ENCODE measurements at regions of chr16 and their contacts with region 1.

Region 1: DNA sequence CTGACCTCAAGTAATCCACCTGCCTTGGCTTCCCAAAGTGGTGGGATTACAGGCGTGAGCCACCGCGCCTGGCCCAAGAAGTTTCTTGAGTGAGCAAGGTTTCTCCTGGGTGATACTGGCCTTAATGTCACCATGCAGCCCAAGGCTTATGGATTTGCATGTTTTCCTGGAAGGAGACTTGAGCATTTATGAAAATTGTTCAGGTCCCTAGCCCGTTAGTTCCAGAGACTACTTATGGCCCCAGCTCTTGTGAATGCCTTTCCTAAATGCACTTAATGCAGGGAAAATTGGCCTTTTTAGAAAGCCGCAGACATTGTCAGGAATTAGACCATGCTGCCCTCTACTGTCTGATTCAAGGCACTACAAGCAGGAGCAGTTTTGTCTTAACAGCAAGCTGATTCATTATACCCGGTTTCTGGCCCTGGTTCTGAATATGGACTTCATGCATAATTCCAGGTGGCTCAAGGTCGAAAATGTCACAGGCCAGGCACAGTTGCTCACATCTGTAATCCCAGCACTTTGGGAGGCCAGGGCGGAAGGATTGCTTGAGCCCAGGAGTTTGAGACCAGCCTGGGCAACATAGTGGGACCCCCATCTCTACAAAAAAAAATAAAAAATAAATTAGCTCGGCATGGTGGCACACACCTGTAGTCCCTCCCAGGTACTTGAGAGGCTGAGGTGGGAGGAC is 91.3 kb downstream of the SNX29 start:
- DNase-seq: no peak
- H3K4me3 ChIP-seq: no peak overlapping the region
- H3K27ac ChIP-seq: no peak overlapping the region
- H3K4me1 ChIP-seq: peaks cover 0 to 4% (median 1%) of the 10 kb centered on the region in 4 donors
- H3K27me3 ChIP-seq: no peaks in the 10 kb centered on the region
- CTCF ChIP-seq: peak; percentile 60 to 97 (median 92)
- EP300 ChIP-seq: no peak
- POLR2A ChIP-seq: no peak

Region 2: DNA sequence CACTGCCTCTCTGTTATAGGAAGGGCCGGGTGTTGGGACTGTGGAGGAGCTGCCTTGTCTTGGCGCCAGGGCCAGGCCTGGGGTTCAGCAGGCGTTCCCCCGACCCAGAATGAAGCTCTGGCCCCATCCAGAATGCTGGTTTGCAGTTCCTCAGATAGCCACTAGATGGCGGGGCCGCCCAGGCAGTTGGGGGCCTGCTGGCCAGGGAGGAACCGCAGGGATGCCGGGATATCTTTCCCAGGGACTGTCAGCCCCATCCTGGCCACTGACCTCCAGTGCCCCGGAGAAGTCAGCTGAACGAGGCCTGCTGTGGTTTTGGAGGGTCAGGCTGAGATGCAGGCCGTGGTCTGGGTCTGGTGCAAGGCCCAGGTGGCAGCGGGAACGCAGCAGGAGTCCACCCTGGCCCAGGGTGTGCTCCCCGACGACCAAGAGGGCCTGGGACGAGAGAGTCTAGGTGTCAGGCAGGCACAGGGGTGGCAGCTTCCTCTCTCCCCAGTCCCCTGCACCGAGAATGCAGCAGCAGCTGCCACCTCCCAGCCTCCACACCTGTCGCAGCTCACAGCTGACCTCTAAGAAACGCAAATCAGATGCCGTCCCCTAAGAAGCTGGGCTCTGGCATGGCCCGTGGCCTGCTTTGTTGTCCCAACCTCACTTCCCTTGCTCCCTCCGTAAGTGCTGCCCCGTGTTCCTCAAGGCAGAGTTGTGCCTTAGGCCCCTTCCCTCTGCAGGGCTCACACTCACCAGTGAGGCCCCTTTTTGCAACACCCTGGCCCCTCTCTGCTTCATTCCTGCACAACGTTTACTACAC is 671.4 kb before region 1 on chr16:
- intact Hi-C with region 1: loop called (anchors 5 kb)
- DNase-seq: peak; percentile 84
- H3K4me3 ChIP-seq: no peak overlapping the region
- H3K27ac ChIP-seq: no peak overlapping the region
- H3K4me1 ChIP-seq: peaks cover 0 to 3% (median 0%) of the 10 kb centered on the region in 4 donors
- H3K27me3 ChIP-seq: no peaks in the 10 kb centered on the region
- CTCF ChIP-seq: peak; percentile 88 to 100 (median 96)
- EP300 ChIP-seq: no peak
- POLR2A ChIP-seq: no peak

Region 3: DNA sequence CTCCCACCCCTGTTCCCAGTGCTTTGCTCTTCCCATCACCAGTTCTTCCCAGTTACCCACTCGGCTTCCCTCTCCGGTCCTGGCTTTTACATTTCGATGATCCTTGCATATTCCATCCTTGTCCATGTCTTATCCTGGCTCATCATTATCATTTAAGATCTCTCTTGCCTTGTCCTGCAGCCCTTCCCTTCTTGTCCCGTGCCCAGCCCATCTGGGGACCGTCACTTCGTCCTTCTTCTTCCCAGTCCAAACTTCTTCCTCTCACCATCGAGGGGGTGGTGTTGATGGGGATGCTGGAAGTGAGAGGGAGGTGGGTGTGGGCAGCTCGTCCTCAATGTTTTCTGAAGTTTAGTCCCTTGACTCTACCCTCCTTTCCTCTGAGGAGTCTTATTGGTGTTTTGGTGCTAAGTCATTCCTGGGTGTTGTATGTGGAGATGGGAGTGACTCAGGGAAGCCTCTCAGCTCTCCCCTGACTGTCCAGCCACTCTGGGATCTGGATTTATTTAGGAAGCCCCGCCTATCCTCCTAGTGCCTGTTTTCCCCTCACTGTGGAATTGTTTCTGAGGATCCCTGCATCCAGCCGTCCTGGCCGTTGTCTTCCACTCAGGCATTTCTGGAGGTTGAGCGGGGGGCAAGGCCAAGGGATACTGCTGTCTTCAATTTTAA is 90.3 kb before region 1 on chr16:
- intact Hi-C with region 1: loop called (anchors 5 kb)
- DNase-seq: peak; percentile 80
- H3K4me3 ChIP-seq: peak overlapping the region; percentile 76 to 98 (median 92)
- H3K27ac ChIP-seq: peak overlapping the region; percentile 82 to 92 (median 90)
- H3K4me1 ChIP-seq: peaks cover 0 to 29% (median 23%) of the 10 kb centered on the region in 4 donors
- H3K27me3 ChIP-seq: no peaks in the 10 kb centered on the region
- CTCF ChIP-seq: no peak
- EP300 ChIP-seq: no peak
- POLR2A ChIP-seq: no peak